H1 (cell line): ENCODE measurements at regions of chr1 and their contacts with region 1.

Region 1: GRCh38 chr1:201582705-201583442 is 43.9 kb downstream of the NAV1 start:
- DNase-seq: no peak
- H3K4me3 ChIP-seq: no peak overlapping the region
- H3K27ac ChIP-seq: no peak overlapping the region
- H3K4me1 ChIP-seq: peaks cover 0 to 6% (median 4%) of the 10 kb centered on the region in 4 experiments; a peak in 5 of 7 replicates
- H3K27me3 ChIP-seq: no peaks in the 10 kb centered on the region; a peak in 1 of 7 replicates
- CTCF ChIP-seq: no peak
- EP300 ChIP-seq: no peak
- POLR2A ChIP-seq: no peak
- RAD21 ChIP-seq: no peak

Region 2: GRCh38 chr1:201593200-201593921 is 10.5 kb after region 1 on chr1:
- CTCF ChIA-PET with region 1: interaction called, 12 read pairs
- POLR2A ChIA-PET with region 1: interaction called, 3 read pairs
- DNase-seq: no peak
- H3K4me3 ChIP-seq: no peak overlapping the region
- H3K27ac ChIP-seq: no peak overlapping the region
- H3K4me1 ChIP-seq: peaks cover 11 to 31% (median 22%) of the 10 kb centered on the region in 4 experiments
- H3K27me3 ChIP-seq: no peaks in the 10 kb centered on the region; a peak in 1 of 7 replicates
- CTCF ChIP-seq: no peak
- EP300 ChIP-seq: no peak
- POLR2A ChIP-seq: no peak
- RAD21 ChIP-seq: no peak